Activated CD8-positive, alpha-beta memory T cell treated with anti-CD3 and anti-CD28 coated beads, Interleukin-2, amount 10 ng/mL, durations not matched to agents 7 days and 5 days (primary cell): ENCODE measurements at regions of chr20 and their contacts with region 1.

Region 1: DNA sequence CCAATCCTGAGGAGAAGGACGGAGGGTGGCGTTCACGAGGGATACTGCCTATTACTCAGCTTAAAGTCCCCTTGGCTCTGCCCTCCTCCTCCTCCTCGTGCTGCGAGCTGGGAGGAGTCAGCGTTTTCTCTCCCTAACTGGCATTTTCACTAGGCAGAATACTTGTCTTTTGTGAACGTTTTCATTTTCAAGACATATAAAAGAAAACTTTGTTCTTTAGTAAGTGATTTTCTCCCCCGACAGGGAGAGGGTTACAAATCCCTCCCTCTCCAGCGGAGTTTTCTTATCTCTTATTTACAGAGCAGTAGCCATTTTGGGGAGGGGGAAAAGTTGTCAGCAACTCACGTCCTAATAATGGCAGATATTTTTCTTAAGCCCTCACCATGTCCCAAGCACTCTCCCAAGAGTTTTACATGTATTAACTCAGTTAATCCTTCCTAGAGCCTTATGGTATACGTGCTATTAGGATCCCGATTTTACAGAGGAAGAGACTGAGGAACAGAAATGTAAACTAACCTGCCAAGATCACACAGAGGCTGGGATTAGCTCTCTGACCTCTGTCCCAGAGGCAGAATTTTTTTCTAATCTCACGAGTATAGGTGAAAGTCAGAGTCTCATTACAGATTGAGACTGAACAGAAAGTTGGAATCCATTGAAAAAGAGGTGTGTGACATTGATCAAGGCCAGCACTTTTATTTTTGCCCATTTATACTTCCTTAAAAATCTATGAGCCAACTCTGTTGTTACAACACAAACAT is 30.0 kb upstream of the ZNF217 start:
- DNase-seq: peak; percentile 62
- ATAC-seq: peak; percentile 79
- H3K4me3 Mint-ChIP-seq: peak overlapping the region; percentile 61
- H3K27ac Mint-ChIP-seq: peak overlapping the region; percentile 97
- H3K4me1 Mint-ChIP-seq: peaks cover 43% of the 10 kb centered on the region
- H3K27me3 Mint-ChIP-seq: no peaks in the 10 kb centered on the region

Region 2: DNA sequence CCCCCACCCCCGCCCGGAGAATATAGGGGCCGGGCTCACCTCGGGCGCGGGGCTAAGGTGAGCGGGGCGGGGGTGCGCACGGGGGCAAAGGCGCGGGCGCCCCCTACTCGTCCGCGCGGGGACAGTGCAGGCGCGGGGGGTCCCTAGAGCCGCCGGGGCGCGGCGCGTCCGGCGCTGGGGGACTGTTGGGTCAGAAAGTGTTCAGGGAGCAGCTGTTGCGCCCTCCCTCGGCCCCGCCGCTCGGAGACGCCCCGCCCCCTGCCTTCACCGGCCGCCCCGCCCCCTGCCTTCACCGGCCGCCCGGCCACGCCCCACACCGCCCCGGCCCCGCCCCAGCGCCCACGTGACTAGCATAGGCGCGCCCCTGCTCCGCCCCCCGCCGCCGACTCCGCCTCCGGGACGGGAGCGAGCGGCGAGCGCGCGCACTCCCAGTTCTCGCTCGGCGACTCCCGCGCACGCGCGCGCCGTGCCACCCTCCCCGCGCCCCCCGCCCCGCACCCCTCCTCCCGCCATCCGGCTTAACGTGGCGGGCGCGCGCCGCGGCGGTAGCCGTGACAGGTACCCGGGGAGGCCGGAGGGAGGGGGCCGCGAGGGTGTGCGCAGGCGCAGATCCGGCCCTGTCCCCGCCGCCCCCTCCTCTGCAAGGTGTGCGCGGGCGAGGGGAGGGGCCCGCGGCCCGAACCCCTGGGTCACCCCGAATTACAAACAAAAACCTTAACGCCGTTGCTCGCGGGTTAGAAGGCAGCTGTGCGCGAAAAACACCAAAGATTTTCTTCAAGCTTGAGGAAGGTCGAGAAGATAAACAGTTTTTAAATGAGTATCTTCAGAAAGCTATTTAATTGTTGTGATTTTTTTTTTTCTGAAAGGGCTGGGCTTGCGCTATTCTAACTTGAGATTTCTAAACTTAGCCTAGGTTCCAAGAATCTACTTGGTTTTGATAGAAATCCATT is 29.3 kb before region 1 on chr20:
- CTCF ChIA-PET with region 1: interaction called, 16 read pairs
- DNase-seq: peak; percentile 96
- ATAC-seq: peak; percentile 79
- H3K4me3 Mint-ChIP-seq: peak overlapping the region; percentile 82
- H3K27ac Mint-ChIP-seq: peak overlapping the region; percentile 96
- H3K4me1 Mint-ChIP-seq: peaks cover 40% of the 10 kb centered on the region
- H3K27me3 Mint-ChIP-seq: no peaks in the 10 kb centered on the region

Region 3: GRCh38 chr20:53611449-53611894 is 12.2 kb before region 1 on chr20:
- CTCF ChIA-PET with region 1: interaction called, 51 read pairs
- DNase-seq: peak; percentile 36
- ATAC-seq: no peak
- H3K4me3 Mint-ChIP-seq: no peak overlapping the region
- H3K27ac Mint-ChIP-seq: no peak overlapping the region
- H3K4me1 Mint-ChIP-seq: peaks cover 28% of the 10 kb centered on the region
- H3K27me3 Mint-ChIP-seq: no peaks in the 10 kb centered on the region

Region 4: GRCh38 chr20:53643031-53643832 is 19.6 kb after region 1 on chr20:
- CTCF ChIA-PET with region 1: interaction called, 18 read pairs
- DNase-seq: peak; percentile 85
- ATAC-seq: peak; percentile 98
- H3K4me3 Mint-ChIP-seq: peak overlapping the region; percentile 66
- H3K27ac Mint-ChIP-seq: peak overlapping the region; percentile 98
- H3K4me1 Mint-ChIP-seq: peaks cover 35% of the 10 kb centered on the region
- H3K27me3 Mint-ChIP-seq: no peaks in the 10 kb centered on the region